ENCODE measurements at regions of chr2 and their contacts with region 1.

Region 1: DNA sequence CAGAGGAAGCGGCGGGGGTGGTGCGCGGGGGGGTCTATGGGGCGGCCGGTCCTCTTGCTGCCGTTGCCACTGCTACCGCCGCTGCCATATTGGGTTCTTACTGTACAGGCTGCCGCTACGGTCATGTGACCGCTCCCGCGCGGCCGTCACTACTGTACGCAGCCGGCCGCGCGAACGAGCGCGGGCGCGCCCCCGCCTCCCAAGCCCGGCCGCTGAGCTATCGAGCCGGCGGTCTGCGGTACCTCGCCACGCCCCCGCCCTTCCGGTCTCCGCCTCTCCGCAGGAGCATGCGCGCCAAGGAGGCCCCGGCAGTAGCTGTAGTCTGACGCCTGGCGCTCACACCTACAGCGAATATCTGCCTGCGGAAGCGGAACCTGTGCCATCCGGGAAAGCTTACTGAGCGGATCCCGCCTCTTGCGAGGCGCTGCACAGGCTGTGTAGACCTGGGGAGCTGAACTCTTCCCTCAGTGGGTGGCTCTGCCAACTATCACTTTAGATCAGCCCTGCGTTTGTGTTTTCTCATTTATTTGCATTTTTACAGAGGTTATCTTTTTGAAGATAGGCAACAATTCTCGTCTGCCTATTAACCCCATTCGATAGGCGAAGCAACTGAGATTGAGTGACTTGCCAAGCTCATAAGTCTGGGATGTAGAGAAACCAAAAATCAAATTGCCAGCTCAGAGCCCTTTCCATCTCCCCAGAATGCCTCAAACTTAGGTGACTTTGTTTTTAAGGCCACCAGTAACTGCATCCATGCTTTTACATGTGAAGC is at the start of gene ASXL2:
- DNase-seq: peak; percentile 90 to 99 (median 97)
- ATAC-seq: peak; percentile 86
- H3K4me3 Mint-ChIP-seq: peak within 1 kb of the TSS; percentile 96 to 99 (median 97)
- H3K27ac Mint-ChIP-seq: peak within 1 kb of the TSS; percentile 95 to 99 (median 98)
- H3K4me1 Mint-ChIP-seq: peaks cover 18 to 40% (median 37%) of the 10 kb centered on the region in 4 donors
- H3K27me3 Mint-ChIP-seq: no peaks in the 10 kb centered on the region
- polyA plus RNA-seq, gene ASXL2: 7.6 to 11.2 (median 9.9) TPM

Region 2: DNA sequence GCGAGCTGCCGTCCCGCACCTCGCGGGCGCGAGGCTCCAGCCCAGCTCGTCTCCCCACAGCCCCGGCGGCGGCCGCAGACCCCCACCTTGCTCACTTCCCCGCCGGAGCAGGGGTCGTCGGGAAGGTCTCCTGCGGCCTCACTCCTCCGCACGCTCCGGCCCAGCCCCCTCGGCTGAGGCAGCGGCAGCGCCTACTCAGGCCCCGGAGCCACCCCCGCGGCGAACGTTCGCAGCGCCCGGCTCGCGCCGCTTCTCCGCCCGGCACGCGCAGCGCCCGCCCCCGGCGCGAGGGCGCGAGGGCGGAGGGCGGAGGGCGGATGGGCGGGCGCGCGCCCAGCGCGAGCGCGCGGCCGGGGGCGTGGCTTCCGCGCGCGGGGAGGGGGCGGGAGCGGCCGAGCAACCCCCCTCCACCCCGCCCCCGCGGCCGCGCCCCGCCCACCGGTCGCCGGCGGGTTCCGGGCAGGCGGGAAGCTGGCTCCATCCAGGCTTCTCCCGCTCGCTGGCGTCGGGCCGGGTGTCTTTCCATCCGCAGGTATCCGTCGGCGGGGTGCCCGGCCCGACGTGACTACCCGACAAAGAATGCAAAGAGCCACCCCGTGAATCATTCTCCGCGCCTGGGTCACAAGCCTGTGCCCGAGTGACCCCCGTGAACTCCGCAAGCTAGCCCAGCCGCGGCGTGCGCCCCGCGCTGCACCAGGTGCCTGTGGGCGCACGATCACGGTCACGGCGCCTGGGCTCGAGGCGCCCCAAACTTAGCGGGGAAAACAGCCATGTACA is 205.1 kb before region 1 on chr2 and contains the start of gene DTNB:
- POLR2A ChIA-PET with region 1: interaction called, 21 read pairs
- DNase-seq: peak; percentile 63 to 90 (median 79)
- ATAC-seq: peak; percentile 75 to 79
- H3K4me3 Mint-ChIP-seq: peak within 1 kb of the TSS; percentile 84 to 92 (median 88)
- H3K27ac Mint-ChIP-seq: peak within 1 kb of the TSS; percentile 43 to 92 (median 84)
- H3K4me1 Mint-ChIP-seq: peaks cover 14 to 40% (median 30%) of the 10 kb centered on the region in 4 donors
- H3K27me3 Mint-ChIP-seq: no peaks in the 10 kb centered on the region
- polyA plus RNA-seq, gene DTNB: 16.3 to 18.4 (median 17.7) TPM

Region 3: GRCh38 chr2:25797620-25798488 is 80.7 kb before region 1 on chr2:
- POLR2A ChIA-PET with region 1: no interaction called
- DNase-seq: no peak
- ATAC-seq: no peak
- H3K4me3 Mint-ChIP-seq: peak overlapping the region in 2 of 10 donors; percentile 11 to 52
- H3K27ac Mint-ChIP-seq: peak overlapping the region; percentile 12 to 98 (median 88)
- H3K4me1 Mint-ChIP-seq: peaks cover 27 to 72% (median 65%) of the 10 kb centered on the region in 4 donors
- H3K27me3 Mint-ChIP-seq: no peaks in the 10 kb centered on the region

Region 4: DNA sequence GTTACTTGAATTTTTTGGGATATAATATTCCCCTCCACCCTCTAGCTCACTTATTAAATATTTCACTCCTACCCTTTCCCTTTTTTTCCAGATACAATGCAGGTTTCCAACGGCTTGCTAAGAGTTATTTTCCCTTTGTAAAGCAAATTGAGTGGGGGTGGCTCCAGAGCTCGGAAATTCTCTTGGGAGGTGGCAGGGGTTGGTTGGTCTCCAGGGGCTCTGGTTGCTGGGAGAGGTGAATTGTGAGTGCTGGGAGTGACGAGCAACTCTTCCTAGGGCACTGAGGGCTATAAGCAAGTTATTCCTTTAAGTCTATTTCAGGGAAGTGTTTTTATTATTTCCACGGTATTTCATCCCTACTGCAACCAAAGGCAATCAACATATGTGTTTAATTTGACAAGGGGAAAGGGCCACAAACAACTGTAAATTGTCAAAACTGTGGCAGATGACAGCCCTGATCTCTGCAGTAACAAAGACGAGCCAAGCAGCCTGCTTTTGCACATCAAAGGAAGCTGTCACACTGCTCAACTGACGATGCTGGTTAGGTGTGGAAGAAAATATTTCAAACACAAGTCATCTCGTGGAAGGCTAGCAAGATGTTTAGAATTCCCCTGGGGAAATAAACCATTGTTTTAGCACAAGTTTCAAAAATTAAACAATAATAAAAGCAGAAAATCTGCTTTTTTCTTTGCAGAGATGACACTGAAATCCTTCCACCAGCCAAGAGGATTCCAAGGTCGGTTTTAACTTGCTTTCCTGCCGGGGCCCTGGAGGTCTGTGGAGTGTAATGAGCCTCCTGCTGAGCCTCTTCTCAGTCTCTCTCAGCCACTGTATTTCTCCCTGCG is 34.5 kb after region 1 on chr2:
- POLR2A ChIA-PET with region 1: interaction called, 11 read pairs
- DNase-seq: peak in 2 of 10 donors; percentile 14 to 29
- ATAC-seq: no peak
- H3K4me3 Mint-ChIP-seq: no peak overlapping the region
- H3K27ac Mint-ChIP-seq: peak overlapping the region in 1 of 10 donors; percentile 79
- H3K4me1 Mint-ChIP-seq: peaks cover 9 to 17% (median 15%) of the 10 kb centered on the region in 4 donors
- H3K27me3 Mint-ChIP-seq: no peaks in the 10 kb centered on the region

Region 5: DNA sequence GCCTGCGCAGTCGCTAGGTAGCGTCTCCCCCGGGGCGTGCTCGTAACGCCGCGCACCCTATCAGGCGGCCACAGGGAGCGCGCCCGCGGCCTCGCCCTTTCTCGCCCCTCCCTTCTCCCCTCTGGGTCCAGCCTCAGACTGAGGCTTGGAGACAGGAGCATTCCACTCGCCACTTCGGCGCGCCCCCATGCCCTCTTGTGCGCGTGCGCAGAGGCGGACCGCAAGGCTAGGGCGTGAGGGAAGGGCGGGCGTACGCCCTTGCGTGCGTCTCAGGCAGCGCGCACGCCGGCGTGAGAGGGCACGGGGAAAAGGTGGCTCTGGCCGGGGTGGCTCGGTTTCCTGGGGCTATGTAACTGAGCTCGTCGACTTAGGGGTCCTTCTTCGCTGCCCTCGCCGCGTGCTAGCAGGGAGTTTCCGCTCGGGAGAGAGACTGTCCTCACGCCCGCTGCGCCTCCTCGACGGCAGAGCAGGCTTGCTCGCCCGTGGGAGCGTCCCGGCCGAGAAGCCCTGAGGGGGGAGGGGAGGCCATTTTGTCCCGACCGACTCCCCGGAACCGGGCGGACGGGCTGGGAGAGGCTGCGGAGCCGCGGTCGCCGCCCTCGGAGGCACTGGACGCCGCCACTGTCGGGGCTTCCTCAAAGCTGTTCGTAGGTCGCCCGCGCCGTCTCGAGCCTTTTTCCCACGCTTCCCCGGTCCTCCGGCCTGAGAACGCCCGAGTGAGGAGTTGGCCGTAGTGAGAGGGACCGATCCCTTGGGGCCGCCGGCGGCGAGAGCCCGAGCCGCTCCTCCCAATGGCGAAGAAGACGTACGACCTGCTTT is 155.5 kb after region 1 on chr2 and contains the start of gene RAB10:
- POLR2A ChIA-PET with region 1: interaction called, 12 read pairs
- DNase-seq: peak; percentile 97 to 100 (median 99)
- ATAC-seq: peak; percentile 85 to 87
- H3K4me3 Mint-ChIP-seq: peak within 1 kb of the TSS; percentile 90 to 98 (median 95)
- H3K27ac Mint-ChIP-seq: peak within 1 kb of the TSS; percentile 89 to 97 (median 96)
- H3K4me1 Mint-ChIP-seq: peaks cover 12 to 45% (median 44%) of the 10 kb centered on the region in 4 donors
- H3K27me3 Mint-ChIP-seq: no peaks in the 10 kb centered on the region
- polyA plus RNA-seq, gene RAB10: 64.0 to 80.5 (median 66.6) TPM

Measured in naive thymus-derived CD8-positive, alpha-beta T cell (primary cell).